CD8-positive, alpha-beta T cell (primary cell): ENCODE measurements at regions of chr7 and their contacts with region 1.

Region 1: GRCh38 chr7:152145853-152146466 is 120.5 kb downstream of the GALNT11 start:
- DNase-seq: peak in 7 of 9 experiments; percentile 11 to 65 (median 43)
- ATAC-seq: peak; percentile 46
- H3K4me3 ChIP-seq: no peak overlapping the region
- H3K4me3 Mint-ChIP-seq: no peak overlapping the region
- H3K27ac ChIP-seq: peak overlapping the region in 1 of 2 experiments; percentile 61
- H3K27ac Mint-ChIP-seq: peak overlapping the region; percentile 91
- H3K4me1 ChIP-seq: peaks cover 47% of the 10 kb centered on the region
- H3K4me1 Mint-ChIP-seq: peaks cover 46% of the 10 kb centered on the region
- H3K27me3 ChIP-seq: no peaks in the 10 kb centered on the region
- H3K27me3 Mint-ChIP-seq: no peaks in the 10 kb centered on the region
- CTCF ChIP-seq: peak; percentile 53

Region 2: DNA sequence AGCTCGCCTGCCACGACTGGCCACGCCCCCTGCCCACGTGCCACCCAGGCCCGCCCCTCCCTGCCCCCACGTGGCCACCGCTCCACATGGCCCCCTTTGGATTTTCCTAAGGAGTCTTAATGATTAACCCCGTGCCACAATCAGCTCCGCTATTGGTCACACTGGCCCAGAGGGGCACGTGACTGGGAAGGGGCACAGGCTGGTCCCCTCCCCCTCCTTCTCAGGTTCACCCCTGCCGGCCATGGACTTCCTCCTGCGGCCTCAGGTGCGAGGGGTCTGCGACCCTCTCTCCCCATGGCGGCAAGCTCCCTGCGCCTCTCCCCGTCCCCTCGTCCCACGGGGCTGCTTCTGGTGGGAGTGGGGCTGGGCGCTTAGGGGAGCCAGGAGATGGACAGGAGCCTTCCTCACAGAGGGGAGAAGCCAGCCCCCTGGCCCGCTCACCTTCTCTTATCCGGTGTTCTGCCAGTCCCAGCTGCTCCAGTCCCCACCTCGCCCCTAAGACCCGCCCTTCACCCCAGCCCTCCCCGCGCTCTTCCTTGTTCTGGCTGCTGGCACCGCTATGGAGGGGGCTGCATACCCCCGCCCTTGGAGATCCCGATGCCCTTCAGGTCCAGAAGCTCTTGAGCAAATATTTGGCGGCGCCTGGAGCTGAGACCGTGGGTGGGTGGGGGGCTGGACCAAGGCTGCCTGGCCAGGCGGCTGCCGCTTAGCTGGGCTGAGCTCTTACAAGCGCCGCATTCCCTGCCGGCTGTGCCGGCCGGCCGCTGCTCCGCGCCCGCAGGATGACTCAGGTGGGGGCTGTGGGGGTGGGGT is 1083.4 kb before region 1 on chr7:
- CTCF ChIA-PET with region 1: no interaction called
- POLR2A ChIA-PET with region 1: no interaction called
- intact Hi-C with region 1: no loop called
- DNase-seq: no peak
- ATAC-seq: no peak
- H3K4me3 ChIP-seq: no peak overlapping the region
- H3K4me3 Mint-ChIP-seq: no peak overlapping the region
- H3K27ac ChIP-seq: no peak overlapping the region
- H3K27ac Mint-ChIP-seq: no peak overlapping the region
- H3K4me1 ChIP-seq: peaks cover 24% of the 10 kb centered on the region
- H3K4me1 Mint-ChIP-seq: peaks cover 30% of the 10 kb centered on the region
- H3K27me3 ChIP-seq: no peaks in the 10 kb centered on the region
- H3K27me3 Mint-ChIP-seq: no peaks in the 10 kb centered on the region
- CTCF ChIP-seq: no peak

Region 3: GRCh38 chr7:151570366-151570915 is 575.5 kb before region 1 on chr7:
- CTCF ChIA-PET with region 1: no interaction called
- POLR2A ChIA-PET with region 1: no interaction called
- intact Hi-C with region 1: loop called in 1 of 2 experiments (anchors 10 kb)
- DNase-seq: peak in 2 of 9 experiments; percentile 13 to 35
- ATAC-seq: no peak
- H3K4me3 ChIP-seq: no peak overlapping the region
- H3K4me3 Mint-ChIP-seq: no peak overlapping the region
- H3K27ac ChIP-seq: no peak overlapping the region
- H3K27ac Mint-ChIP-seq: no peak overlapping the region
- H3K4me1 ChIP-seq: no peaks in the 10 kb centered on the region
- H3K4me1 Mint-ChIP-seq: no peaks in the 10 kb centered on the region
- H3K27me3 ChIP-seq: no peaks in the 10 kb centered on the region
- H3K27me3 Mint-ChIP-seq: no peaks in the 10 kb centered on the region
- CTCF ChIP-seq: no peak

Region 4: GRCh38 chr7:151936207-151936606 is 209.8 kb before region 1 on chr7:
- CTCF ChIA-PET with region 1: no interaction called
- POLR2A ChIA-PET with region 1: no interaction called
- intact Hi-C with region 1: loop called in 1 of 2 experiments (anchors 5 kb)
- DNase-seq: peak in 2 of 9 experiments; percentile 61 to 81
- ATAC-seq: peak; percentile 91
- H3K4me3 ChIP-seq: peak overlapping the region; percentile 4 to 24
- H3K4me3 Mint-ChIP-seq: peak overlapping the region; percentile 80
- H3K27ac ChIP-seq: peak overlapping the region; percentile 54 to 77
- H3K27ac Mint-ChIP-seq: peak overlapping the region; percentile 96
- H3K4me1 ChIP-seq: peaks cover 15% of the 10 kb centered on the region
- H3K4me1 Mint-ChIP-seq: peaks cover 17% of the 10 kb centered on the region
- H3K27me3 ChIP-seq: peaks cover 0 to 3% of the 10 kb centered on the region in 2 experiments
- H3K27me3 Mint-ChIP-seq: no peaks in the 10 kb centered on the region
- CTCF ChIP-seq: no peak

Region 5: DNA sequence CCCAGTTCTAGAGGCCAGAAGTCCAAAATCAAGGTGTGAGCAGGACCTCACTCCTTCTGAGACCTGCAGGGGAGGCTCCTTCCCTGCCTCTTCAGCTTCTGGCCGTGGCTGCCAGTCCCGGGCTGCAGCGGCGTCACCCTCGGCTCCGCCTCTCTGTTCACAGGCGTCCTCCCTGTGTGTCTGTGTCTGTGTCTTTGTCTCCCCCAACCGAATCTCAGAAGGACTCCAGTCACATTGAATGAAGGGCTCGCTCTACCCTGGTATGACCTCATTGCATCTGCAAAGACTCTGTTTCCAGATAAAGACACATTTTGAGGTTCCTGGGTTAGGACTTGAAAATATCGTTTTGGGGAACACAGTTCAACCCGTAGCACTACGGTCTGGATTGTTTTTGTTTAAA is 153.6 kb before region 1 on chr7:
- CTCF ChIA-PET with region 1: no interaction called
- POLR2A ChIA-PET with region 1: no interaction called
- intact Hi-C with region 1: loop called in 1 of 2 experiments (anchors 2 kb)
- DNase-seq: peak; percentile 12 to 75 (median 58)
- ATAC-seq: peak; percentile 97
- H3K4me3 ChIP-seq: no peak overlapping the region
- H3K4me3 Mint-ChIP-seq: no peak overlapping the region
- H3K27ac ChIP-seq: no peak overlapping the region
- H3K27ac Mint-ChIP-seq: peak overlapping the region; percentile 58
- H3K4me1 ChIP-seq: no peaks in the 10 kb centered on the region
- H3K4me1 Mint-ChIP-seq: peaks cover 7% of the 10 kb centered on the region
- H3K27me3 ChIP-seq: no peaks in the 10 kb centered on the region
- H3K27me3 Mint-ChIP-seq: peaks cover 28% of the 10 kb centered on the region
- CTCF ChIP-seq: peak; percentile 34

Region 6: GRCh38 chr7:152035817-152036216 is 110.1 kb before region 1 on chr7:
- CTCF ChIA-PET with region 1: no interaction called
- POLR2A ChIA-PET with region 1: no interaction called
- intact Hi-C with region 1: no loop called
- DNase-seq: no peak
- ATAC-seq: no peak
- H3K4me3 ChIP-seq: no peak overlapping the region
- H3K4me3 Mint-ChIP-seq: no peak overlapping the region
- H3K27ac ChIP-seq: no peak overlapping the region
- H3K27ac Mint-ChIP-seq: no peak overlapping the region
- H3K4me1 ChIP-seq: peaks cover 3% of the 10 kb centered on the region
- H3K4me1 Mint-ChIP-seq: peaks cover 14% of the 10 kb centered on the region
- H3K27me3 ChIP-seq: no peaks in the 10 kb centered on the region
- H3K27me3 Mint-ChIP-seq: no peaks in the 10 kb centered on the region
- CTCF ChIP-seq: no peak